Stomach (tissue), 19 donors: ENCODE measurements at regions of chr11 and their contacts with region 1.

Region 1: DNA sequence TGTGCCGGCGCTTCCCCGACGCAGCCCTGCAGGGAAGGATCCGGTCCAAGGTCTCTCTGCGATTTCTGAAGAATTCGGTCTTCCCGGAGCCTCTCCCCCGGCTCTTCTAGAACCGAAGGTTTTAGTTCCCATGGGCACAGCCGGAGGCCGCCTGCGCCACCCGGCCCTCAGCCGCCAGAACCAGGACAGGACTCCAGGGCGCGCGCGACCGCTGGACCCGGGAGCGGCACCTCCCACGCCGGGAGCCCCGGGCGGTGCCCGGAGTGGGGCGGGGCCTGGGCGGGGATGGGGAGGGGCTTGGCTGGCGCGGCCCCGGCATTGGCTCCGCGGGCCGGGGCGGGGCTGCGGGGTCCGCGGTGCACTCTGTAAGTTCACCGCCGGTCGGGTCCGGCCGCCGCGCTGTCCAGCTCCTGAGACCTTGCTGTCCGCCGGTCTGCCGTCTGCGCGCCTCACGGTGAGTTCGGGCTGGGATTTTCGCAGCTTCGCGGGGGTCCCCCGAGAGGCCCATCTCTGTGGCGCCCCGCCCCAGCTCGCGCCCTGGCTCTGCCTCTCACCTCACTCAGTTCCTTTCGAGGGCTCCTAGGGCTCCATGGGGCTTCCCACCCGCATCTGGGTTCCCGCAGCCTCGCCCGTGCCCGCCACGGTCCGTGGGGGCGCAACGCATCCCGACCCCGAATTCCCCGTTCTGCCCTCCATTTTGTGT is at the start of gene CDC42EP2:
- DNase-seq: peak; percentile 91 to 95
- H3K4me3 ChIP-seq: peak within 1 kb of the TSS; percentile 70 to 98 (median 88)
- H3K27ac ChIP-seq: peak within 1 kb of the TSS; percentile 85 to 96 (median 92)
- H3K4me1 ChIP-seq: peaks cover 34 to 86% (median 82%) of the 10 kb centered on the region in 4 donors
- H3K27me3 ChIP-seq: no peaks in the 10 kb centered on the region
- CTCF ChIP-seq: no peak
- EP300 ChIP-seq: no peak
- POLR2A ChIP-seq: peak in 1 of 4 donors; percentile 76
- total RNA-seq, gene CDC42EP2: 0.89 to 18.3 (median 8.3) TPM in 4 of 5 donors, not detected in the other

Region 2: DNA sequence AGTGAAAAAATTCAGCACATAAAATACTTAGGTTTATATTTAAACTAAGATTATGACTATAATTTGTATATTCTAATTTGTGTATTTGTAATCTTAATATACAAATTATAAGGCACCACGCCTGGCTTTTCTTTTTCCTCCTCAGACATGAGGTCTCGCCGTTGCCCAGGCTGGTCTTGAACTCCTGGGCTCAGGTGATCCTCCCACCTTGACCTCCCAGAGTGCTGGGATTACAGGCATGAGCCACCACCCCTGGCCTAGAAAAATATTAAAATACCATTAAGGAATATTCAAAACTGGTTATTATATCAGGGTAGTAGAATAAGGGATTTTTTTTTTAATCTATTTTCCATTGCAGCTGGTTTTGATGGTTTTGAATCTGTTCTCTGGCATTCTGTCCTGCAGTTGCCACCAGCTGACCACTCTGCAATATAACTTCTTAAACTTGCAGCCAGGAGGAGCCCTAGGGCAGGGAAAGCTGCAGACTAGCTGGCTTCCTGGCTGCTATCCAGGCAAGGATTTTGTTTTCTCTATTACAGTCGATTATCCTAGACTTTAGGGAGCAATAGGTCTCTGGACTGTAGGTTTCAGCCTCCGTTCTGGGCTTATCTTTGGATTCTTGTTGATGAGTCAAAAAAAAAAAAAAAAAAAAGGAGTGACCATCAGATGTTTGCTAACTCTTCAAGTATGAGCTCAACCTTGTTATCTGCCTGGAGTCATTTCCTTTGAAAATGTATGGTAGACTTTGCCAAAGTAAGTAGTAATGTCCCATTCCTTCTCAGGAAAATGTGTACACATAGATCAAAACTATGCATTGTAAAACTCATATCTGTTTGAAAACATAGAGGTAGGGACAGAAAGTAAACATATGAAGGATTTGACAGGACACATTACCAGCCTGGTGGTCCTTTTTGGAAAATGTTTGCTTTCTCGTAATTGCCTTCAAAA is 39.6 kb before region 1 on chr11:
- intact Hi-C with region 1: loop called (anchors 2 kb)
- DNase-seq: peak; percentile 75 to 93
- H3K4me3 ChIP-seq: no peak overlapping the region
- H3K27ac ChIP-seq: peak overlapping the region; percentile 55 to 79 (median 72)
- H3K4me1 ChIP-seq: peaks cover 19 to 50% (median 40%) of the 10 kb centered on the region in 4 donors
- H3K27me3 ChIP-seq: no peaks in the 10 kb centered on the region
- CTCF ChIP-seq: peak in 5 of 7 experiments; percentile 62 to 91 (median 71)
- EP300 ChIP-seq: no peak
- POLR2A ChIP-seq: no peak

Region 3: GRCh38 chr11:65418711-65419459 is 104.2 kb after region 1 on chr11:
- intact Hi-C with region 1: no loop called
- DNase-seq: peak; percentile 96 to 98
- H3K4me3 ChIP-seq: peak overlapping the region; percentile 30 to 92 (median 86)
- H3K27ac ChIP-seq: peak overlapping the region; percentile 98 to 100 (median 99)
- H3K4me1 ChIP-seq: peaks cover 43 to 65% (median 58%) of the 10 kb centered on the region in 4 donors
- H3K27me3 ChIP-seq: no peaks in the 10 kb centered on the region
- CTCF ChIP-seq: no peak
- EP300 ChIP-seq: peak; percentile 41
- POLR2A ChIP-seq: peak in 2 of 4 donors; percentile 58 to 65